ENCODE measurements at regions of chr20 and their contacts with region 1.

Region 1: GRCh38 chr20:38842558-38842981 is 37.1 kb downstream of the PPP1R16B start:
- DNase-seq: peak; percentile 50 to 67 (median 56)
- H3K4me3 ChIP-seq: no peak overlapping the region
- H3K4me3 Mint-ChIP-seq: peak overlapping the region; percentile 60 to 87 (median 74)
- H3K27ac ChIP-seq: peak overlapping the region; percentile 83
- H3K27ac Mint-ChIP-seq: peak overlapping the region; percentile 96 to 100 (median 99)
- H3K4me1 ChIP-seq: peaks cover 96% of the 10 kb centered on the region
- H3K4me1 Mint-ChIP-seq: peaks cover 67 to 88% (median 77%) of the 10 kb centered on the region in 4 donors
- H3K27me3 ChIP-seq: no peaks in the 10 kb centered on the region
- H3K27me3 Mint-ChIP-seq: no peaks in the 10 kb centered on the region

Region 2: DNA sequence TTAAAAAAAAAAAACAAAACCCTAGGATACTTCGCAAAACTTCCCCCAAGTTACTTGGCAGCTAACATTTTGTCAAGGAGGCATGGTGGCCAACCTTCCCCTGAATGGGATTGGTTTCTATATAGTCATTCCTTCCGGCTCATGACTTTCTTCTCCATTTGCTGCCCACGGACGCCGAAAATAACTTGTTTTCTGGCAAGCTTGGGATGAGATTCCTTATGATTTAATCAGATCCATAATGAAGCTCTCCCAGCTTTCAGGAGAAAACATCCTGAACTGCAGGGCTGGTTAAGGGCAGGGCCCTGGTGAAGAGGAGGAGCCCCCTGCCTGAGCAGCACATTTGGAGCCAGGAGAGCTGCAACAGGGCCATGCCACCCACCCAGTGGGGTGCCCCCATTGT is 12.8 kb after region 1 on chr20:
- CTCF ChIA-PET with region 1: interaction called, 11 read pairs
- POLR2A ChIA-PET with region 1: interaction called, 18 read pairs
- intact Hi-C with region 1: loop called (anchors 2 kb)
- DNase-seq: no peak
- H3K4me3 ChIP-seq: no peak overlapping the region
- H3K4me3 Mint-ChIP-seq: peak overlapping the region in 1 of 8 donors; percentile 30
- H3K27ac ChIP-seq: no peak overlapping the region
- H3K27ac Mint-ChIP-seq: peak overlapping the region in 6 of 7 donors; percentile 15 to 79 (median 62)
- H3K4me1 ChIP-seq: peaks cover 70% of the 10 kb centered on the region
- H3K4me1 Mint-ChIP-seq: peaks cover 49 to 82% (median 67%) of the 10 kb centered on the region in 4 donors
- H3K27me3 ChIP-seq: no peaks in the 10 kb centered on the region
- H3K27me3 Mint-ChIP-seq: no peaks in the 10 kb centered on the region

Region 3: GRCh38 chr20:38863024-38863851 is 20.7 kb after region 1 on chr20:
- CTCF ChIA-PET with region 1: interaction called, 6 read pairs
- POLR2A ChIA-PET with region 1: interaction called, 18 read pairs
- intact Hi-C with region 1: loop called (anchors 2 kb)
- DNase-seq: peak; percentile 46 to 87 (median 51)
- H3K4me3 ChIP-seq: no peak overlapping the region
- H3K4me3 Mint-ChIP-seq: peak overlapping the region in 7 of 8 donors; percentile 13 to 77 (median 61)
- H3K27ac ChIP-seq: peak overlapping the region; percentile 61
- H3K27ac Mint-ChIP-seq: peak overlapping the region; percentile 92 to 96 (median 95)
- H3K4me1 ChIP-seq: peaks cover 59% of the 10 kb centered on the region
- H3K4me1 Mint-ChIP-seq: peaks cover 51 to 78% (median 62%) of the 10 kb centered on the region in 4 donors
- H3K27me3 ChIP-seq: no peaks in the 10 kb centered on the region
- H3K27me3 Mint-ChIP-seq: no peaks in the 10 kb centered on the region

Region 4: GRCh38 chr20:38875175-38875993 is 32.8 kb after region 1 on chr20:
- CTCF ChIA-PET with region 1: interaction called, 36 read pairs
- POLR2A ChIA-PET with region 1: interaction called, 196 read pairs
- intact Hi-C with region 1: loop called (anchors 1 kb)
- DNase-seq: peak; percentile 78 to 85 (median 79)
- H3K4me3 ChIP-seq: peak overlapping the region; percentile 33 to 48
- H3K4me3 Mint-ChIP-seq: peak overlapping the region; percentile 86 to 95 (median 88)
- H3K27ac ChIP-seq: peak overlapping the region; percentile 75
- H3K27ac Mint-ChIP-seq: peak overlapping the region; percentile 97 to 100 (median 99)
- H3K4me1 ChIP-seq: peaks cover 87% of the 10 kb centered on the region
- H3K4me1 Mint-ChIP-seq: peaks cover 69 to 99% (median 84%) of the 10 kb centered on the region in 4 donors
- H3K27me3 ChIP-seq: no peaks in the 10 kb centered on the region
- H3K27me3 Mint-ChIP-seq: no peaks in the 10 kb centered on the region